Mammary epithelial cell (primary cell): ENCODE measurements at regions of chr20 and their contacts with region 1.

Region 1: GRCh38 chr20:14820771-14821170 is 483.4 kb upstream of the FLRT3 start:
- DNase-seq: peak; percentile 14
- H3K4me3 ChIP-seq: no peak overlapping the region
- H3K27ac ChIP-seq: no peak overlapping the region
- H3K4me1 ChIP-seq: no peaks in the 10 kb centered on the region
- H3K27me3 ChIP-seq: no peaks in the 10 kb centered on the region
- CTCF ChIP-seq: no peak

Region 2: DNA sequence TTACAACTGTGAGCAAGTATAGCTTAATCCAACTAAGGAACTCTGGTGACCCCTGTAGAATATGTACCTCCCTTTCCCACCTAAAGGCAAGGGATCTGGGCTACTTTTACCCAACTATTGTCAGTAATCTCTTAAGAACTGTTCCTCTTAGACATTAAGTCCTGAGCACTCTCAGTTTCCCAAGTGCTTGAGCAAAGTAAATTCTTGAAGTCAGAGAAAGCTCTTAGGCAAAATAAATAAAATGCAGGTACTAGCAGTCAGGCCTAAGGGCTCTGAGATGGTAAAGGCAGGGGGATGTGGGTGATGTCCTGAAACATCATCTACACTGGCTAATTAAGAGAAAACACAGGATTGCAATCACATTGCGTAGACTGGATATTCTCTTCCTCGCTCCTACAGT is 37.0 kb before region 1 on chr20:
- CTCF ChIA-PET with region 1: interaction called, 12 read pairs
- dilution Hi-C with region 1: no loop called
- in situ Hi-C with region 1: no loop called
- intact Hi-C with region 1: no loop called
- DNase-seq: no peak
- H3K4me3 ChIP-seq: no peak overlapping the region
- H3K27ac ChIP-seq: no peak overlapping the region
- H3K4me1 ChIP-seq: no peaks in the 10 kb centered on the region
- H3K27me3 ChIP-seq: no peaks in the 10 kb centered on the region
- CTCF ChIP-seq: no peak